Breast epithelium (tissue), 4 donors: ENCODE measurements at regions of chr2 and their contacts with region 1.

Region 1: GRCh38 chr2:182038578-182038977 is 52.9 kb downstream of the PPP1R1C start:
- DNase-seq: no peak
- H3K4me3 ChIP-seq: no peak overlapping the region
- H3K27ac ChIP-seq: no peak overlapping the region
- H3K4me1 ChIP-seq: no peaks in the 10 kb centered on the region
- H3K27me3 ChIP-seq: no peaks in the 10 kb centered on the region
- CTCF ChIP-seq: no peak
- POLR2A ChIP-seq: no peak

Region 2: DNA sequence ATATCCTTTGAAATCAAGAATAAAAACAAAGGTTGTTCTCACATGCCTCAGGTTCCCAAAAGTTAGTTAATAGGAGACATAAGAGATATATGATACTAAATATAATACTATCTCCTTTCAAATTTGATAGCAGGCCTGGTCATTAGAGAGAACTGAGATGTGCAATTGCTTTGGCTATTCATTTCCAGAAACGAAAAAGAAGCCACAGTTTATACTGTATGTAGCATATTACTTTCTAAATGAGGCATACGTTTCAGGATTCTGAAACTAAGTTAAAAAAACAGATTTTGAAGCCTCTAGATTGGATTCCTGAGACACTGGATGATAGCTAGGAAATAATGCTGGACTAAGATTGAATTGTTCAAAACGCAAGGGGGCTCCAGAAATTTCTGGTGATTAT is 45.8 kb before region 1 on chr2:
- intact Hi-C with region 1: loop called (anchors 2 kb)
- DNase-seq: no peak
- H3K4me3 ChIP-seq: no peak overlapping the region
- H3K27ac ChIP-seq: no peak overlapping the region
- H3K4me1 ChIP-seq: no peaks in the 10 kb centered on the region
- H3K27me3 ChIP-seq: no peaks in the 10 kb centered on the region
- CTCF ChIP-seq: no peak
- POLR2A ChIP-seq: no peak

Region 3: DNA sequence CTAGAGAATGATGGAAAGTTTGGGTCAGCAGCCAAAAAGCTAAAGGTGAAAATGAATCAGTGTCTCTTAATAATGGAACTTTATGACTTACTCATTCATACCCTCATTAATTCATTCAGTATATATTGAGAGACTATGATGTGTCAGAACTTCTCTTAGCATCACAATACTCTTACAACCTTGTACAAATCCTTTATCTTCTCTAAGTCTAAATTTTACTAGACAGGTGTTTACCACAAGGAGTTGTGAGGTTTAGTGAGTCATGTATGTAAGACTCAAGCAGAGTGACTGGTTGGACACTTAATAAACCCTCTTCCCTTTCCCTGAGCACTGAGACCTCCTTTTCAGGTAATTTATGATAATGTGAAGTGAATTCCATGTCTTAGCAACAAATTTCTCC is 76.7 kb after region 1 on chr2:
- intact Hi-C with region 1: no loop called
- DNase-seq: no peak
- H3K4me3 ChIP-seq: no peak overlapping the region
- H3K27ac ChIP-seq: no peak overlapping the region
- H3K4me1 ChIP-seq: no peaks in the 10 kb centered on the region
- H3K27me3 ChIP-seq: no peaks in the 10 kb centered on the region
- CTCF ChIP-seq: no peak
- POLR2A ChIP-seq: no peak